CD14-positive monocyte (primary cell): ENCODE measurements at regions of chr15 and their contacts with region 1.

Region 1: DNA sequence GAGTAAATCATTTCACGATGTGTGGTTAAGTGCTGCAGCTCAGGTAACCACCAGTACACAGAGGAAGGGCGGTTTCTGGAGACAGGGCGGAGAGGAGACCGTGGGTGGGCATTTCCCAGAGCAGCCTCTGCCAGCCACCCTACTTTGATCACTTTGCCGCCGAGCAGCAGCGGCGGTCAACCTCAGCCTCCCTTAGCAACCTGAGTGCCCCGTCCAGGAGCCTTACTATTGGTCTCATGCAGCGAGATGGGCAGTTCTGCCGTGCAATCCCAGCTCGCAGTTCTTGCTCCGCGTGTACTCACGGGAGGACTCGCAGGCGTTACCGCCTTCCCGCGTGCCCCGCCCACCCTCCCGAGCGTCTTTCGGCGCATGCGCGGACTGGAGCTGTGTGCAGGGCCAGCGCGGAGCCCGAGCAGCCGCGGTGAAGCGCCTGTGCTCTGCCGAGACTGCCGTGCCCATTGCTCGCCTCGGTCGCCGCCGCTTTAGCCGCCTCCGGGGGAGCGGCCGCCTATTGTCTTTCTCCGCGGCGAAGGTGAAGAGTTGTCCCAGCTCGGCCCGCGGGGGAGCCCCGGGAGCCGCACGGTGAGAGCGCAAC is at the start of gene AKAP13:
- DNase-seq: peak; percentile 97 to 98 (median 98)
- H3K4me3 ChIP-seq: peak within 1 kb of the TSS; percentile 67 to 92 (median 87)
- H3K4me3 Mint-ChIP-seq: peak within 1 kb of the TSS; percentile 93 to 97
- H3K27ac ChIP-seq: peak within 1 kb of the TSS; percentile 71 to 75
- H3K27ac Mint-ChIP-seq: peak within 1 kb of the TSS; percentile 86 to 94 (median 89)
- H3K4me1 ChIP-seq: peaks cover 12 to 25% of the 10 kb centered on the region in 2 donors
- H3K4me1 Mint-ChIP-seq: peaks cover 34% of the 10 kb centered on the region
- H3K27me3 ChIP-seq: no peaks in the 10 kb centered on the region
- H3K27me3 Mint-ChIP-seq: peaks cover 2 to 6% (median 3%) of the 10 kb centered on the region in 3 donors
- CTCF ChIP-seq: no peak
- polyA plus RNA-seq, gene AKAP13: 47.9 to 99.7 (median 92.6) TPM

Region 2: GRCh38 chr15:85337425-85338074 is 42.8 kb before region 1 on chr15:
- intact Hi-C with region 1: no loop called
- DNase-seq: no peak
- H3K4me3 ChIP-seq: no peak overlapping the region
- H3K4me3 Mint-ChIP-seq: no peak overlapping the region
- H3K27ac ChIP-seq: no peak overlapping the region
- H3K27ac Mint-ChIP-seq: no peak overlapping the region
- H3K4me1 ChIP-seq: no peaks in the 10 kb centered on the region
- H3K4me1 Mint-ChIP-seq: no peaks in the 10 kb centered on the region
- H3K27me3 ChIP-seq: no peaks in the 10 kb centered on the region
- H3K27me3 Mint-ChIP-seq: peaks cover 2 to 9% (median 2%) of the 10 kb centered on the region in 3 donors
- CTCF ChIP-seq: no peak

Region 3: DNA sequence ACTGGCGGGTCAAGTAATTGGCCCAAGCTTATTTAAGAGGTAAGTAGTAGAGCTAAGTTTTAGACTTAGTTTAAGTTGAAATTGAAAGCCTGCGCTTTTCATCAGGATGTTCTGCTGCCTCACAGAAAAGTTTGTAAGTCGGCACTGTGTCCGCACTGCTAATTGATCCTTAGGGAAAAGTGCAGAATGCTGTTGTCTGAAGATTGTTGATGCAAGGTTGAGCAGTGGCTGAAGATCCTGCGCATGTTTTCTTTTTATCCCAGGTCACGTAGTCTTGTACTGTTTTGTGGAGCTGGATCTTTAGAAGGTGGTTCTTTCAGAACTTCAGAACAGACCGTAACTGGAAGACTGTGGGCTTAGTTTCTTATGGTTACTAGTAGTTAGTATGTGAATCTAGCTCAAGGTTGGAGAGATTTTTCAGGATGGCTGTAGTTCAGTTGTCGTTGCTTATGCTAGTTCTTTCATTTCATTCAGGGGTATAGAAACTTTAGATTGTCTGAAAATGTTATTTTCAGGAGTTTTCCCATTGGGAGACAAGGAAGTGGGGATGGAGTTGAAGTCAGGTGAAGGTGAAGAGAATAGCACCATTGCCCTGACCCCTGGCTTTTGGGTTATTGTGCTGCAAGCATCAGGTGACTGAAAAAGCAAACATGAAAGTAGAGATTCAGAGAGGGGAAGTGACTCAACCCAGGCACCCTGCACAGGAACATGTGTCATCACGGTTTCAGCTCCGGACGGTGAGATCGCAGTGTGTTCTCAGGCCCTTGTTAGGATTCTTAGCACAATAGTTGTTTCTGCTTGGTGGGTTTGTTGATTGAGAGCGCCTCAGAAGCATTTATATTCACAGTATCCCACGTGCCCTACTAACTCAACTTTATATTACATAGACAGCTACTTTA is 32.9 kb after region 1 on chr15:
- intact Hi-C with region 1: loop called in 1 of 2 experiments (anchors 2 kb)
- DNase-seq: peak; percentile 87 to 95 (median 91)
- H3K4me3 ChIP-seq: no peak overlapping the region
- H3K4me3 Mint-ChIP-seq: no peak overlapping the region
- H3K27ac ChIP-seq: peak overlapping the region in 1 of 2 donors; percentile 75
- H3K27ac Mint-ChIP-seq: peak overlapping the region; percentile 47 to 90 (median 82)
- H3K4me1 ChIP-seq: peaks cover 19 to 37% of the 10 kb centered on the region in 2 donors
- H3K4me1 Mint-ChIP-seq: peaks cover 31% of the 10 kb centered on the region
- H3K27me3 ChIP-seq: no peaks in the 10 kb centered on the region
- H3K27me3 Mint-ChIP-seq: no peaks in the 10 kb centered on the region
- CTCF ChIP-seq: no peak